B cell (primary cell): ENCODE measurements at regions of chr17 and their contacts with region 1.

Region 1: GRCh38 chr17:2054512-2055291 is at the start of gene HIC1:
- DNase-seq: peak; percentile 89
- ATAC-seq: peak; percentile 38
- H3K4me3 ChIP-seq: peak within 1 kb of the TSS in 3 of 5 experiments; percentile 44 to 57 (median 52)
- H3K4me3 Mint-ChIP-seq: peak within 1 kb of the TSS; percentile 80
- H3K27ac ChIP-seq: no peak within 1 kb of the TSS
- H3K27ac Mint-ChIP-seq: peak within 1 kb of the TSS; percentile 67
- H3K4me1 ChIP-seq: peaks cover 55 to 75% of the 10 kb centered on the region in 2 donors
- H3K4me1 Mint-ChIP-seq: peaks cover 36% of the 10 kb centered on the region
- H3K27me3 ChIP-seq: peaks cover 0 to 59% (median 14%) of the 10 kb centered on the region in 4 experiments
- H3K27me3 Mint-ChIP-seq: peaks cover 7% of the 10 kb centered on the region
- CTCF ChIP-seq: peak; percentile 95
- total RNA-seq, gene HIC1: 1.5 and 1.9 TPM in 2 replicates

Region 2: GRCh38 chr17:1908699-1909309 is 145.9 kb before region 1 on chr17:
- CTCF ChIA-PET with region 1: interaction called, 3 read pairs
- POLR2A ChIA-PET with region 1: no interaction called
- intact Hi-C with region 1: loop called (anchors 10 kb)
- DNase-seq: peak; percentile 51
- ATAC-seq: peak; percentile 7
- H3K4me3 ChIP-seq: peak overlapping the region in 3 of 5 experiments; percentile 5 to 25 (median 19)
- H3K4me3 Mint-ChIP-seq: peak overlapping the region; percentile 50
- H3K27ac ChIP-seq: no peak overlapping the region
- H3K27ac Mint-ChIP-seq: no peak overlapping the region
- H3K4me1 ChIP-seq: peaks cover 24 to 29% of the 10 kb centered on the region in 2 donors
- H3K4me1 Mint-ChIP-seq: peaks cover 28% of the 10 kb centered on the region
- H3K27me3 ChIP-seq: peaks cover 0 to 67% (median 38%) of the 10 kb centered on the region in 4 experiments
- H3K27me3 Mint-ChIP-seq: peaks cover 54% of the 10 kb centered on the region
- CTCF ChIP-seq: no peak

Region 3: DNA sequence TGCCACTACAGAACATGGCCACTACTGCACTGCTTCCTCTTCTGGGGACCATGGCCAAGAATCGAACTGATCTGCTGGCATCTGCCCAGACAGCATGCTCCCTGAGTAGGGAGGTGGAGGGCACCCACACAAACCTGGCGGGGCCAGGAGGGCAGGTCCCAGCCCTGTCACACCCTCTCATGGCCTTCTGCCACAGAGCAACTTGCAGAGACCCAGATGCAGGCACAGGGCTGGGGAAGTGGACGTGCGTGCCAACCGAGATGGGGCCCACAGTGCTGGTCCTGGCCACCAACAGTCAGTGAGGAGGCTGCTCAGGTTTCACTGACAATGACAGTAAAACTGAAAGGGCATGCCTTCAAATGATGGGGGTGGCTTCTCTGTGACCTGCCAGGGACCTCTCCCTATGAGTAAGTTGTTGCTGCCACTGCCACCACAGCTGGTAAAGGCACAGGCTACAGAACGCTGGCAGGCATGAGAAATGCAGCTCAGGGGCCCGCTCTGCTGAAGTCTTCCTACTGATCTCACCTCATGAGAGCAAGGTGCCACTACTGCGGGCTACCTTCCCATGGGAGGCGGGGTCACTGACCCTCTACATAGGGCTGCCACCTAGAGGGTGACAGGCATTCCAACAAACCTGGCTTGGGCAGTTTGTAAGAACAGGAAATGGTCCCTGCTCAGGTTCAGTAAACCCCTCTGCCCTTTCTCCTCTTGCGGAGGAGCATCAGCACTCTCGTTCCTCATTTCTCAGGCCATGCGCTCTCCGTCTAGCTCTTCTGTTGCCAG is 15.7 kb after region 1 on chr17:
- CTCF ChIA-PET with region 1: interaction called, 28 read pairs
- POLR2A ChIA-PET with region 1: no interaction called
- intact Hi-C with region 1: no loop called
- DNase-seq: peak; percentile 33
- ATAC-seq: peak; percentile 71
- H3K4me3 ChIP-seq: no peak overlapping the region
- H3K4me3 Mint-ChIP-seq: no peak overlapping the region
- H3K27ac ChIP-seq: no peak overlapping the region
- H3K27ac Mint-ChIP-seq: peak overlapping the region; percentile 50
- H3K4me1 ChIP-seq: peaks cover 2 to 26% of the 10 kb centered on the region in 2 donors
- H3K4me1 Mint-ChIP-seq: peaks cover 28% of the 10 kb centered on the region
- H3K27me3 ChIP-seq: no peaks in the 10 kb centered on the region
- H3K27me3 Mint-ChIP-seq: no peaks in the 10 kb centered on the region
- CTCF ChIP-seq: no peak

Region 4: DNA sequence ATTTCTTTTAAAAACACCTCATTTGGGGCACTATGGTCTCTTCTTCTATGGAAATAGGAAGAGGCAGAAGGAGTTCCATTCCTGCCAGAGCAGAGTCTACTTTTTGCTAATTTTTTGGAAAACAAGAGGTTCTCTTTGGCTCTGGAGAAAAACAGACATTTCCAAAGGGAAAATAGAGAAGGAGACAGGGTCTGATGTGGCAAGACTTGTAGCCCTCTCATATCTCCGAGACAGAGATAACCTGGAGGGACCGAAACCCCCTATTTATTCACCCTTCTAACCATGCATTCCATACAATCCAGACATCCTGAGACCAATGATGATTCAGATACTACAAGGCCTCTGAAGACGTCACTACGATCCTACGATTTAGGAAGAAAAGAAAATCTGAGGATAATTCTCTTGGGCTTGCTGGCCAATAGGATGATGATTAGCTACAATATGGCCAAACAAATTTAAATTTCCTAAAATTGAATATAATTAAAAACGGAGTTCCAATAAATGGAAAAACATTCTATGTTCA is 70.4 kb after region 1 on chr17:
- CTCF ChIA-PET with region 1: interaction called, 10 read pairs
- POLR2A ChIA-PET with region 1: no interaction called
- intact Hi-C with region 1: no loop called
- DNase-seq: no peak
- ATAC-seq: no peak
- H3K4me3 ChIP-seq: no peak overlapping the region
- H3K4me3 Mint-ChIP-seq: no peak overlapping the region
- H3K27ac ChIP-seq: no peak overlapping the region
- H3K27ac Mint-ChIP-seq: no peak overlapping the region
- H3K4me1 ChIP-seq: peaks cover 22 to 23% of the 10 kb centered on the region in 2 donors
- H3K4me1 Mint-ChIP-seq: peaks cover 25% of the 10 kb centered on the region
- H3K27me3 ChIP-seq: no peaks in the 10 kb centered on the region
- H3K27me3 Mint-ChIP-seq: no peaks in the 10 kb centered on the region
- CTCF ChIP-seq: no peak

Region 5: DNA sequence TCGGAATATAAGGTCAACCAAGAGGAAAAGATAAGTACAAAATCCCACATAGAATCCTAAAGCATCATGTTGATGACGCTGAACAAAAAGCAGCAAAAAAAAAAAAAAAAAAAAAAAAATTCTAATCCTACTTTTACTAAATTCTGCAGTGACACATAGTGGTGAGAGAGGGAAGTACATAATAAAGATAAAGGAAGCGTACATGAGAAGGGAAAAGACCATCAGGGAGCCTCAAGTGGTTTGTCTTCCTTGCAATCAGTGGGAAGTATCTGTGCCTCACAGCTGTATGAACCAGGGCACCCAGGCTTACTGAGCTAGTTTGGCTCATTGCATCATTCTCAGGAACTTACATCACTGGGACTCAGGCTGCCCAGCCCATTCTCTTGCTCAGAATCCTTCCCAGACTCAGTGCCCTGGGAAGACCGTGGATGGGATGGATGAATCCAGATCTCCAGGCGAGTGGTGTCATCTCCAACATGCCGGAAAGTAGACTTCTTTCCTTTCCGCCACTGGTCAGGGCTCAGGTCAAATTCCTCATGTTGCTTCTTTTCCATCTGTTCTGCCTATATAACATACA is 227.7 kb after region 1 on chr17:
- CTCF ChIA-PET with region 1: interaction called, 35 read pairs
- POLR2A ChIA-PET with region 1: no interaction called
- intact Hi-C with region 1: loop called (anchors 1 kb)
- DNase-seq: peak; percentile 71
- ATAC-seq: peak; percentile 41
- H3K4me3 ChIP-seq: no peak overlapping the region
- H3K4me3 Mint-ChIP-seq: no peak overlapping the region
- H3K27ac ChIP-seq: no peak overlapping the region
- H3K27ac Mint-ChIP-seq: peak overlapping the region; percentile 46
- H3K4me1 ChIP-seq: no peaks in the 10 kb centered on the region
- H3K4me1 Mint-ChIP-seq: no peaks in the 10 kb centered on the region
- H3K27me3 ChIP-seq: no peaks in the 10 kb centered on the region
- H3K27me3 Mint-ChIP-seq: no peaks in the 10 kb centered on the region
- CTCF ChIP-seq: peak; percentile 79

Region 6: DNA sequence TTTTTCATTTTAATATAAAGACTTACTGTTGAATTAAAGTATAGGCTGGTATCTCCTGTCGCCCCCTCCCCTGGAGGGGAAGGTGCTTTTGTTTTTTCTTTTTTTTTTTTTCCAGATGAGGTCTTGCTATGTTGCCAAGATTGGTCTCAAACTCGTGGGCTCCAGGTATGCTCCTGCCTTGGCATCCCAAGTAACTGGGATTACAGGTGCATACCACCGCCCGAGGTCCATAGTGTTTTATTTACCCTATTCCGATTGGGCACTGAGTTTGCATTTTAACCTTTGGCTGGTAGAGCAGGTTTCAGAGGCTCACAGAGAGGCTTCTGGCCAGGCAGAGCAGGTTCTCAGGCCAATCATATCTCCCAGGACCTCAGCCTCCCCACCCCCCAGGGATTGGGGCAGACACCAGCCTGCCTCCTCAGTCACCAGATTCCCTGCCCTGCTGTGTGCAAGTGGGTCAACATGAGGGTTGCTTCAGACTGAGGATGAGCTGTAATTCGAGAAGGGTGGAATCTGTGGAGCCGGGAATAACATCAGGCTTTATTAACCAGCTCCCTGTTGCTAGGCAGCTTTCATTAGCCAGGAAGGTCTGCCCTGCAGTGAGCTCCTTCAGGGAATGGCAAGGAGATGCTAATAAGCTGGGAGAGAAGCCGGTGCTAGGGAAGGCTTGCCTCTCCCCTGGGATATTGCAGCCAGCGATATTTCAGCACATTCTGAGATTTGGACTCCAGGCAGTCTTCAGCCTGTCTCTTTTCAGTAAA is 293.0 kb after region 1 on chr17:
- CTCF ChIA-PET with region 1: interaction called, 4 read pairs
- POLR2A ChIA-PET with region 1: no interaction called
- intact Hi-C with region 1: loop called (anchors 2 kb)
- DNase-seq: no peak
- ATAC-seq: no peak
- H3K4me3 ChIP-seq: no peak overlapping the region
- H3K4me3 Mint-ChIP-seq: no peak overlapping the region
- H3K27ac ChIP-seq: no peak overlapping the region
- H3K27ac Mint-ChIP-seq: no peak overlapping the region
- H3K4me1 ChIP-seq: no peaks in the 10 kb centered on the region
- H3K4me1 Mint-ChIP-seq: no peaks in the 10 kb centered on the region
- H3K27me3 ChIP-seq: no peaks in the 10 kb centered on the region
- H3K27me3 Mint-ChIP-seq: no peaks in the 10 kb centered on the region
- CTCF ChIP-seq: no peak